ENCODE measurements at regions of chr21 and their contacts with region 1.

Region 1: GRCh38 chr21:34078915-34079314 is 5.5 kb downstream of the MRPS6 start:
- DNase-seq: no peak
- H3K4me3 Mint-ChIP-seq: peak overlapping the region; percentile 64
- H3K27ac Mint-ChIP-seq: peak overlapping the region; percentile 73
- H3K4me1 Mint-ChIP-seq: peaks cover 86% of the 10 kb centered on the region
- H3K27me3 Mint-ChIP-seq: no peaks in the 10 kb centered on the region

Region 2: GRCh38 chr21:33734291-33734690 is 344.6 kb before region 1 on chr21:
- intact Hi-C with region 1: no loop called
- DNase-seq: no peak
- H3K4me3 Mint-ChIP-seq: no peak overlapping the region
- H3K27ac Mint-ChIP-seq: no peak overlapping the region
- H3K4me1 Mint-ChIP-seq: no peaks in the 10 kb centered on the region
- H3K27me3 Mint-ChIP-seq: no peaks in the 10 kb centered on the region

Region 3: GRCh38 chr21:33884376-33885171 is 194.3 kb before region 1 on chr21:
- intact Hi-C with region 1: no loop called
- DNase-seq: no peak
- H3K4me3 Mint-ChIP-seq: no peak overlapping the region
- H3K27ac Mint-ChIP-seq: no peak overlapping the region
- H3K4me1 Mint-ChIP-seq: no peaks in the 10 kb centered on the region
- H3K27me3 Mint-ChIP-seq: peaks cover 5% of the 10 kb centered on the region

Region 4: GRCh38 chr21:34198231-34199120 is 119.6 kb after region 1 on chr21:
- intact Hi-C with region 1: loop called (anchors 2 kb)
- DNase-seq: peak; percentile 35
- H3K4me3 Mint-ChIP-seq: peak overlapping the region; percentile 26
- H3K27ac Mint-ChIP-seq: peak overlapping the region; percentile 94
- H3K4me1 Mint-ChIP-seq: peaks cover 55% of the 10 kb centered on the region
- H3K27me3 Mint-ChIP-seq: no peaks in the 10 kb centered on the region

Region 5: DNA sequence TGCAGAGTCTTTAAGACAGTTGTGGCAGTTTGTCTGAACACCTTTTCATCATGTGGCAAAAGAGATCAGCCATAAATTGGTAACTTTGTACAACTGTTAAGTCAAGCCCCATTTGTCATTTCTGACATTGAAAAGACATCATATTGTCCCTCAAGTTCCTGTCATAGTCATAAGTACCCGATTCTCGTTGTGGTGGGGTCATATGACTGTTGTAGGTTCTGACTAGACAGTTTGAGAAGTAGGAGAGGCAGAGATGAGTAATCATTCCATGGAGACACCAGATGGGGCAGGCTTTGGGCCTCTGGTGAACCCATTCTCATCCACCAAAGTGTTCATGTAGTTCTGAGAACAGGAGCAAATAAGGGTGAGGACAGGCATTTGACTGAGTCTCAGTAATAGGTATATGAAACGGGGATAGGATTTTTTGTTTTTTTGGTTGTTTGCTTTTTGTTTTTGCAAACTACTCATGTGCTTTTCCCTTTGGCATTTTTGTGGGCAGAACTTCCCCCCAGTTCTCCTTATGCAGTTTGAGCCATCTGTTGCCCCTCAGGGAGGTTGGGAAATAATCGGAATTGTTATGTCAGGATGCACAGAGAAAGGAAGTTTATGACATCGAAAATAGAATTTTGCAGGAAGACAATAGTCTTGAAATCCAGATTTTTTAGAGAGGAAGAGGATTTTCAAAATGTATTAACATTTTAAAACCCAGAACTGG is 198.0 kb after region 1 on chr21:
- intact Hi-C with region 1: loop called (anchors 5 kb)
- DNase-seq: no peak
- H3K4me3 Mint-ChIP-seq: no peak overlapping the region
- H3K27ac Mint-ChIP-seq: peak overlapping the region; percentile 63
- H3K4me1 Mint-ChIP-seq: peaks cover 12% of the 10 kb centered on the region
- H3K27me3 Mint-ChIP-seq: peaks cover 11% of the 10 kb centered on the region